ENCODE measurements at regions of chr19 and their contacts with region 1.

Region 1: GRCh38 chr19:4007836-4008539 is 452 bp downstream of the PIAS4 start:
- DNase-seq: no peak
- ATAC-seq: peak; percentile 31
- H3K4me3 ChIP-seq: peak overlapping the region; percentile 84 to 89
- H3K27ac ChIP-seq: peak overlapping the region; percentile 74
- H3K4me1 ChIP-seq: peaks cover 16% of the 10 kb centered on the region
- H3K27me3 ChIP-seq: no peaks in the 10 kb centered on the region
- CTCF ChIP-seq: no peak

Region 2: DNA sequence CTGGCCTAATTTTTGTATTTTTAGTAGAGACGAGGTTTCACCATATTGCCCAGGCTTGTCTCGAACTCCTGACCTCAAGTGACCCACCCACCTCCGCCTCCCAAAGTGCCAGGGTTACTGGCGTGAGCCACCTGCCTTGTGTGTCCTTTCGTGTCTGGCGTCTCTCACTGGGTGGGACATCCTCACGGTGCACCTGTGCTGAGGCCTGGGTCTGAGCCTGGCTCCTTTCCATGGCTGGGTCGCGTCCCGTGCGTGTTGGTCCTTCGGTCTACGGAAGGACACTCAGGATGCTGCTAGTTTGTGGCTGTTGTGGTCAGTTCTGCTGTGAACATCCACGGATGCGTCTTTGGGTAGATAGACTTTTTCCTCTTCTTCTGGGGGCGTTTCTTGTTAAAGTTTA is 19.2 kb after region 1 on chr19:
- CTCF ChIA-PET with region 1: interaction called, 12 read pairs
- POLR2A ChIA-PET with region 1: no interaction called
- in situ Hi-C with region 1: no loop called
- intact Hi-C with region 1: no loop called
- DNase-seq: no peak
- ATAC-seq: no peak
- H3K4me3 ChIP-seq: no peak overlapping the region
- H3K27ac ChIP-seq: no peak overlapping the region
- H3K4me1 ChIP-seq: no peaks in the 10 kb centered on the region
- H3K27me3 ChIP-seq: no peaks in the 10 kb centered on the region
- CTCF ChIP-seq: no peak